Dendritic cell treated with granulocyte-macrophage colony-stimulating factor and Interleukin-4, amounts not matched to agents 40 ng/mL and 50 ng/mL, for 4 days (primary cell): ENCODE measurements at regions of chr3 and their contacts with region 1.

Region 1: DNA sequence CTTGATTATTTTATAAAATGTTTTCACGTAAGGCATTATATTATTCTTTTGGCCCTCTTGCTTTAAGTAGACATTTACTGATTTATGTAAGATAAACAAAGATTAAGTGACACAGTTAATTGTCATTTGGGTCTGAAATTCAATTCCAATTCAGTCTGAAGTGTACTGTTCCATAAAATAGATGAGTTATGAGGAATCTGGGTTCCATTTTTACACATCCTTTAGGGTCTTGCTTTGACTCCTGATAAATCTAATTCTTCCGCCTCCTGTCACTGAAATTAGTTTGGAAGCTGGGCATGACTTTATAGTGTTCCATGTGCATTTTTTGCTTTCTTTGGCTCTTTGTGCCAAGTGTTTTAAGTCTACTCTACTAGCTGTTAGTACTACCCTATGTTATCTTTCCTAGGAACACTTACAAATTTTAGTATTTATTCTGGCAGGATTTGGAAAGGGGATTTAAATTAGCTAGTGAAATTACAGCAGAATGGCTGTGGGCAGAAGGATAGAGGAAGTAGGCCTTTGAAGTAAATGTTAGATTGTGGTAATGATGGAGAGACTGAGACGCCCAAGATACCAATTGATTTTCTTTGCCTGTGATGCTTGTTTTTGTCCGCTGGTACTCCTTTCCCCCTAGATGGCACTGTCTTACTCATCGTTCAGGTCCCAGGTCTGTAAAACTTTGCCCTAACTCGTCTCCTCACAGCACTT is 14.3 kb downstream of the ARL8B start:
- H3K4me3 Mint-ChIP-seq: no peak overlapping the region
- H3K27ac Mint-ChIP-seq: peak overlapping the region; percentile 82
- H3K4me1 Mint-ChIP-seq: peaks cover 84% of the 10 kb centered on the region
- H3K27me3 Mint-ChIP-seq: no peaks in the 10 kb centered on the region

Region 2: GRCh38 chr3:5122030-5122740 is 14.2 kb before region 1 on chr3 and contains the start of gene ARL8B:
- intact Hi-C with region 1: loop called (anchors 2 kb)
- H3K4me3 Mint-ChIP-seq: peak within 1 kb of the TSS; percentile 97
- H3K27ac Mint-ChIP-seq: peak within 1 kb of the TSS; percentile 99
- H3K4me1 Mint-ChIP-seq: peaks cover 33% of the 10 kb centered on the region
- H3K27me3 Mint-ChIP-seq: no peaks in the 10 kb centered on the region

Region 3: GRCh38 chr3:5657106-5657505 is 520.7 kb after region 1 on chr3:
- intact Hi-C with region 1: no loop called
- H3K4me3 Mint-ChIP-seq: no peak overlapping the region
- H3K27ac Mint-ChIP-seq: peak overlapping the region; percentile 54
- H3K4me1 Mint-ChIP-seq: peaks cover 14% of the 10 kb centered on the region
- H3K27me3 Mint-ChIP-seq: no peaks in the 10 kb centered on the region